Right ventricle myocardium inferior (tissue), 1 donor: ENCODE measurements at regions of chr3 and their contacts with region 1.

Region 1: GRCh38 chr3:25508901-25509300 is 80.8 kb downstream of the RARB start:
- DNase-seq: no peak
- ATAC-seq: no peak

Region 2: DNA sequence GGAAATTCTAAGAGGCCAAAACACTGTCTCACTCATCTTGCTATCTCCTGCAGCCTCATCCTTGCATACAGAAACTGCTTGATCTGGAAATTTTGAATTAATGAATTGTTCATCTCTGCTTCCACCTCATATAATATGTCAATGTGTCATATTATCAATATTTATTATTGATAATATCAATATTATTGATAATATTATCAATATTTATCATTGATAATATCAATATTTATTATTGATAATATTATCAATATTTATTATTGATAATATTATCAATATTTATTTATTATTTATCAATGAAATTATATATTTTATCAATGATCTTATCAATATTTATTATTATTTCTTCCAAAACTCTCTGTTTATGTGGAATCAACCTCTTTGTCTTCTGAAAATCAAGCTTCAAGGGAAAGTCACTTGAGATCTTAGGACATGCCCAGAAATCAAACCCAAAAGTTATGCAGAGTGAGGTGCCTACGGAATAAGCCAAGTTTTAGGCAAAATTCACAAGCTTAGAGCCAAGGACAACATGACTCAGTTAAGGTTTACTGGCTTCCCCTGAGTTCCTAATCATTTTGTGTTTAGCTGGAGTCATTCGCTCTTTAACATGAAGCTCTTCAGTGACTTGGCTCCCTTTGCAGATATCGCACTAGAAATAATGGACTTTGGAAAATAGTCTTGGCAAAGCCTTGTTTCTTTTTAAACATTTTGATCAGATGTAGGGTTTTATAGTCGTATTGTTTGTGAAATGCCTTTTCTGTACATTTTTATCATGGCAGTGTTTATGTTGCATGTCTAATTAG is 378.0 kb before region 1 on chr3:
- intact Hi-C with region 1: no loop called
- DNase-seq: no peak
- ATAC-seq: no peak

Region 3: GRCh38 chr3:25433868-25434267 is 75.0 kb before region 1 on chr3:
- intact Hi-C with region 1: loop called (anchors 5 kb)
- DNase-seq: no peak
- ATAC-seq: no peak

Region 4: DNA sequence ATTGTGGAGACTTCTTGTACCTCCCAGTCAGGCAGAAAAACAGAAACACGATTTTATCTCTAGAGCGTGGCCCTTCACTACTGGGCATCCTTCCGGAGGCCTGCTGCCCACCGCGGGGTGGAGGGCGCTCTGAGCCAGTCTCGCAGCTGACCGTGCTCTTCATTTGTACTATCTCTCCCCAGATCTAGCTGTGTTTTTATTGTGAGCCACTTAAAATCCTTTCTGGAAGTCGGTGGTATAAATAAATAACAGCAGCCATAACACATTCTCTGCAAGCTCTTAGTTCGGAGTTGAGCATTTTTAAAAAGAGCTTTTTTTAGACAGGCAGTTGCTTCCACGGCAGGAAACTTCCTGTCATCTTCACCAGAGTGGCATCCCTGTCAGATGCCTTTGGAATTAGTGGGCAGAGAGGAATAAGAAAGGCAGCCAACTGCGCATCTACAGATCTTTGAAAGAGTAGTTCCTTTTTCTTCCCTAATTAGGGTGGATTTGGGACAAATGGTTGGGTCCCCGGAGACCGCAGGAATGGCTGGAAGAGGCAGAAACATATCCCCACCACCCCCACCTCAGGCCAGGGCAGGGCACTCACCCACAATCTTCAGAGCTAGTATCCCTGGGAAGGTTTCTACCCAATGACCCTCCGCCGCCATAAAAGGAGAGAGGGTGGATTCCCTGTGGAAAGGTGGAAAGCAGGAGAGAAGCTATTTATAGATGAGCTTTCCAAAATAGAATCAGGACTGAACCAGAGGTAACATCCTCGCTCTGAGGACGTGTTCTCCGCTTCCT is 64.7 kb after region 1 on chr3:
- intact Hi-C with region 1: loop called (anchors 5 kb)
- DNase-seq: no peak
- ATAC-seq: peak; percentile 27

Region 5: DNA sequence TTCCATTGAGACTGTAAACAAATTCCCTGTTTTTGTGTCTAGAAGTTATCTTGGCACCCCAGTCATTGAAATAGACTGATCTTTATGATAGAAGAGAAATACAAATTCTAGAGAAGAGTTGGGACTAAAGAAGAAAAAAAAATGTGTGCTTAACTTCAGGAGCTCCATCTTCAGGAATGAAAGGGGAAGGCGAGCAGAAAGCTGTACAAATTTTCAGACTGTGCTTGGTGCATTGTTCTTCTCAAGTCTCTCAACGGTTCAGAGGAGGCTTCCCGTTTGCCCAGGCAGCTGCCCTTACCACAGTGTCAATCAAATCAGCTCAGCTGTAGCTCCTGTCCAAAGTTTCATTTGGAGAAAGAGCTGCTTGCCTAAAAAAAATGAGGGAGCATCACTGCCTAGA is 322.7 kb after region 1 on chr3:
- intact Hi-C with region 1: no loop called
- DNase-seq: no peak
- ATAC-seq: no peak